CD8-positive, alpha-beta memory T cell (primary cell): ENCODE measurements at regions of chr1 and their contacts with region 1.

Region 1: DNA sequence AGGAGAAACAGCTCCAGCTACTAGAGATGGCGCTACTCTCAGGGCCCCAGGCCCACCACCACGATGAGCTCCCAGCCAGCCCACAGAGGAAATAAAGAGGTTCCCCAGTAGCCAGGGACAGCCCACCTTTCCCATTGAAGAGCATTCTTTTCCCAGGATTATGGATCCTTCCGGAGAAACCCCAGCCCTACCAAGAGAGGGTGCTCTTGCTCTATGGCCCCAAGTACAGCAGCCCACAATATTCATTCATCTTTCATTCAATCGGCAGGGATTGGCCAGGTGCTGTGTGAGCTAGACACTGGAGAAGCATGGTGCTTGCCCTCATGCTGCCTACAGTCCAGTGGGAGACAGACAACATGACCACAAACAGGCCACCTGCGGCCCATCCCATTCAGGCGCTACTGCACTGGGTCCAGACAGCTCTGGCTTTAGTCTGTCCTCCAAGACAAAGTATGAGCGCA is 29.9 kb downstream of the PMVK start:
- DNase-seq: no peak
- H3K4me3 ChIP-seq: no peak overlapping the region
- H3K4me3 Mint-ChIP-seq: no peak overlapping the region
- H3K27ac ChIP-seq: no peak overlapping the region
- H3K27ac Mint-ChIP-seq: no peak overlapping the region
- H3K4me1 ChIP-seq: no peaks in the 10 kb centered on the region
- H3K4me1 Mint-ChIP-seq: no peaks in the 10 kb centered on the region
- H3K27me3 ChIP-seq: no peaks in the 10 kb centered on the region
- H3K27me3 Mint-ChIP-seq: no peaks in the 10 kb centered on the region

Region 2: GRCh38 chr1:154714638-154715037 is 192.0 kb before region 1 on chr1:
- CTCF ChIA-PET with region 1: no interaction called
- POLR2A ChIA-PET with region 1: interaction called, 10 read pairs
- DNase-seq: peak in 1 of 5 donors; percentile 5
- H3K4me3 ChIP-seq: no peak overlapping the region
- H3K4me3 Mint-ChIP-seq: no peak overlapping the region
- H3K27ac ChIP-seq: no peak overlapping the region
- H3K27ac Mint-ChIP-seq: peak overlapping the region in 4 of 8 donors; percentile 24 to 34 (median 27)
- H3K4me1 ChIP-seq: peaks cover 8% of the 10 kb centered on the region
- H3K4me1 Mint-ChIP-seq: peaks cover 15 to 21% (median 18%) of the 10 kb centered on the region in 3 donors
- H3K27me3 ChIP-seq: no peaks in the 10 kb centered on the region
- H3K27me3 Mint-ChIP-seq: peaks cover 0 to 1% of the 10 kb centered on the region in 2 donors

Region 3: DNA sequence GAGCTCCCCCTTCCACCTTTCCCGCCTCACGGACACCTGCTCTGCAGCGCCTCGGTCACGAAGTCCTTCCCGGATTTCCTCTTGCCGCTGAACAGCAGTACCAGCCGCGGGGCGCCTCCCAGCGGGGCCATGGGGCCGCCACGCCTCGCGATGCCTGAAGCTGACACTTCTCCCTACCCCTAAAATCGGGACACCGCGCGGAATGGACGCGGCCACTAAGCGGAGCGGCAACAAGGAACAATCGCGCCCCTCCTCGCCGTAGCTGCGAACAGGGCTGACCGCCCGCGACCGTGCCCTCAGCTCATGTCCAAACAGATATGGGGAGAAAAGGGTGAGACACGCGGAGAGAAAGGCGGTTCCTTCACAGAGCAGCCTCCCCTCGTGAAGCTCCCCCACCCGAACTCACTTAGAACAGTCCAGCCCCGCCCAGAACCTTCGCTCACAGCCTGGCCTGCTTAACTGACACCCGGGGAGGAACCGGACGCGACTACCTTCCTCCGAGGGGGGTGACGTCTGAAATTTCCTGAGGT is 30.0 kb after region 1 on chr1 and contains the start of gene PMVK:
- CTCF ChIA-PET with region 1: no interaction called
- POLR2A ChIA-PET with region 1: no interaction called
- DNase-seq: peak; percentile 92 to 98 (median 97)
- H3K4me3 ChIP-seq: peak within 1 kb of the TSS; percentile 77
- H3K4me3 Mint-ChIP-seq: peak within 1 kb of the TSS; percentile 94 to 100 (median 98)
- H3K27ac ChIP-seq: peak within 1 kb of the TSS; percentile 97
- H3K27ac Mint-ChIP-seq: peak within 1 kb of the TSS; percentile 99 to 100 (median 99)
- H3K4me1 ChIP-seq: peaks cover 44% of the 10 kb centered on the region
- H3K4me1 Mint-ChIP-seq: peaks cover 47 to 66% (median 57%) of the 10 kb centered on the region in 3 donors
- H3K27me3 ChIP-seq: no peaks in the 10 kb centered on the region
- H3K27me3 Mint-ChIP-seq: no peaks in the 10 kb centered on the region
- total RNA-seq, gene PMVK: 44.7 to 45.2 TPM

Region 4: GRCh38 chr1:155117617-155118016 is 211.0 kb after region 1 on chr1:
- CTCF ChIA-PET with region 1: no interaction called
- POLR2A ChIA-PET with region 1: no interaction called
- DNase-seq: no peak
- H3K4me3 ChIP-seq: no peak overlapping the region
- H3K4me3 Mint-ChIP-seq: no peak overlapping the region
- H3K27ac ChIP-seq: no peak overlapping the region
- H3K27ac Mint-ChIP-seq: no peak overlapping the region
- H3K4me1 ChIP-seq: no peaks in the 10 kb centered on the region
- H3K4me1 Mint-ChIP-seq: no peaks in the 10 kb centered on the region
- H3K27me3 ChIP-seq: no peaks in the 10 kb centered on the region
- H3K27me3 Mint-ChIP-seq: peaks cover 5 to 21% of the 10 kb centered on the region in 2 donors